ENCODE measurements at regions of chr17 and their contacts with region 1.

Region 1: DNA sequence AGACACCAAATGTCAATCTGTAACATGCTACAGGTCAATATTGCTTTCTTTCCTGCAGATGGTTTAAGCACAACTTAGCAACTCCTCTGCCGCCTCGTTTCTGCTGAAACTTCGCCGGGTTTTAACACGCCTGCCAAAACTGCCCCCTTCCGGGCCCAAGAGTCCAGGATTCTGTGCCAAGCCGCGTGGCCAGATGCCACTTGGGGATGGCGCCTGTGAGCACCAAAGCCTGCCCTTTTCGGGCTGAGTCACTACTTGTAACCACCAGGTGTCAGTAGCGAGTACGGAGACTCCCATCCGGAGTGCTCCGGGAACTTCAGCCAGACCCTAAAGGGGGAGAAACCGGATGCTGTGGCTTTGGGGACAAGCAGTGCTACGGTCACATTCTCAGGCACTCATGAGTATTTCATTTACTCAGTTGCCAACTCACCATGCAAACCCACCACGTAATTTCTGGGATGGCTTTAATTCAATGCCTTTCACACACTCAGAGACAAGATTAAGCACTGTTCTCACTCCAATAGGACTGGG is 7.8 kb downstream of the PMP22 start:
- DNase-seq: peak; percentile 60 to 83 (median 74)
- H3K4me3 ChIP-seq: peak overlapping the region; percentile 30
- H3K27ac ChIP-seq: peak overlapping the region in 1 of 2 donors; percentile 5
- H3K4me1 ChIP-seq: peaks cover 19% of the 10 kb centered on the region
- H3K27me3 ChIP-seq: no peaks in the 10 kb centered on the region
- CTCF ChIP-seq: peak; percentile 65 to 82 (median 74)
- EP300 ChIP-seq: no peak
- POLR2A ChIP-seq: no peak

Region 2: GRCh38 chr17:14972844-14973243 is 284.5 kb before region 1 on chr17:
- intact Hi-C with region 1: no loop called
- DNase-seq: no peak
- H3K4me3 ChIP-seq: no peak overlapping the region
- H3K27ac ChIP-seq: no peak overlapping the region
- H3K4me1 ChIP-seq: no peaks in the 10 kb centered on the region
- H3K27me3 ChIP-seq: no peaks in the 10 kb centered on the region
- CTCF ChIP-seq: no peak
- EP300 ChIP-seq: no peak
- POLR2A ChIP-seq: no peak

Region 3: DNA sequence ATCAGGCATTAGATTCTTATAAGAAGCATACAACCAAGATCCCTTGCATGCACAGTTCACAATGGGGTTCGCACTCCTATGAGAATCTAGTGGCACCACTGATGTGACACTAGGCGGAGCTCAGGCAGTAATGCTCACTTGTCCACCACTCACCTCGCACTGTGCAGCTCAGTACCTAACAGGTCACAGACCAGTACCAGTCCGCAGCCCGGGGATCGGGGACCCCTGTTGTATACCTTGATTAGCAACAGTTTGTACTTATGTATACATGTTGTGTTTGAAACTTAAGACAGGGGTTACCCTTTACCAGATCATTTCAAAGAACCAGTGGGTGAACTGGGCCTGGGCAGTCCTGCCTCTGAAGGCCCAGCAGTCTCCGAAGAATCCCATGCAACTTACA is 95.9 kb before region 1 on chr17:
- intact Hi-C with region 1: no loop called
- DNase-seq: no peak
- H3K4me3 ChIP-seq: no peak overlapping the region
- H3K27ac ChIP-seq: no peak overlapping the region
- H3K4me1 ChIP-seq: no peaks in the 10 kb centered on the region
- H3K27me3 ChIP-seq: no peaks in the 10 kb centered on the region
- CTCF ChIP-seq: no peak
- EP300 ChIP-seq: no peak
- POLR2A ChIP-seq: no peak

Region 4: GRCh38 chr17:15289285-15290185 is 32.2 kb after region 1 on chr17:
- intact Hi-C with region 1: no loop called
- DNase-seq: no peak
- H3K4me3 ChIP-seq: no peak overlapping the region
- H3K27ac ChIP-seq: no peak overlapping the region
- H3K4me1 ChIP-seq: no peaks in the 10 kb centered on the region
- H3K27me3 ChIP-seq: no peaks in the 10 kb centered on the region
- CTCF ChIP-seq: no peak
- EP300 ChIP-seq: no peak
- POLR2A ChIP-seq: no peak

Region 5: GRCh38 chr17:15409721-15410250 is 152.5 kb after region 1 on chr17:
- intact Hi-C with region 1: loop called in 1 of 4 experiments (anchors 5 kb)
- DNase-seq: peak; percentile 67 to 78 (median 71)
- H3K4me3 ChIP-seq: peak overlapping the region; percentile 23
- H3K27ac ChIP-seq: peak overlapping the region; percentile 47 to 65
- H3K4me1 ChIP-seq: peaks cover 10% of the 10 kb centered on the region
- H3K27me3 ChIP-seq: no peaks in the 10 kb centered on the region
- CTCF ChIP-seq: no peak
- EP300 ChIP-seq: peak; percentile 37
- POLR2A ChIP-seq: peak; percentile 40

Region 6: GRCh38 chr17:15502369-15503112 is 245.2 kb after region 1 on chr17:
- intact Hi-C with region 1: loop called (anchors 1 to 5 kb)
- DNase-seq: peak; percentile 93 to 95 (median 95)
- H3K4me3 ChIP-seq: peak overlapping the region; percentile 24
- H3K27ac ChIP-seq: peak overlapping the region; percentile 31 to 68
- H3K4me1 ChIP-seq: peaks cover 3% of the 10 kb centered on the region
- H3K27me3 ChIP-seq: no peaks in the 10 kb centered on the region
- CTCF ChIP-seq: peak; percentile 86 to 91 (median 89)
- EP300 ChIP-seq: no peak
- POLR2A ChIP-seq: no peak

Region 7: GRCh38 chr17:15507896-15508295 is 250.6 kb after region 1 on chr17:
- intact Hi-C with region 1: loop called in 3 of 4 experiments (anchors 2 to 5 kb)
- DNase-seq: no peak
- H3K4me3 ChIP-seq: no peak overlapping the region
- H3K27ac ChIP-seq: no peak overlapping the region
- H3K4me1 ChIP-seq: peaks cover 7% of the 10 kb centered on the region
- H3K27me3 ChIP-seq: no peaks in the 10 kb centered on the region
- CTCF ChIP-seq: no peak
- EP300 ChIP-seq: no peak
- POLR2A ChIP-seq: no peak

Measured in ovary (tissue), 10 donors.